GM12878 (cell line): ENCODE measurements at regions of chr1 and their contacts with region 1.

Region 1: DNA sequence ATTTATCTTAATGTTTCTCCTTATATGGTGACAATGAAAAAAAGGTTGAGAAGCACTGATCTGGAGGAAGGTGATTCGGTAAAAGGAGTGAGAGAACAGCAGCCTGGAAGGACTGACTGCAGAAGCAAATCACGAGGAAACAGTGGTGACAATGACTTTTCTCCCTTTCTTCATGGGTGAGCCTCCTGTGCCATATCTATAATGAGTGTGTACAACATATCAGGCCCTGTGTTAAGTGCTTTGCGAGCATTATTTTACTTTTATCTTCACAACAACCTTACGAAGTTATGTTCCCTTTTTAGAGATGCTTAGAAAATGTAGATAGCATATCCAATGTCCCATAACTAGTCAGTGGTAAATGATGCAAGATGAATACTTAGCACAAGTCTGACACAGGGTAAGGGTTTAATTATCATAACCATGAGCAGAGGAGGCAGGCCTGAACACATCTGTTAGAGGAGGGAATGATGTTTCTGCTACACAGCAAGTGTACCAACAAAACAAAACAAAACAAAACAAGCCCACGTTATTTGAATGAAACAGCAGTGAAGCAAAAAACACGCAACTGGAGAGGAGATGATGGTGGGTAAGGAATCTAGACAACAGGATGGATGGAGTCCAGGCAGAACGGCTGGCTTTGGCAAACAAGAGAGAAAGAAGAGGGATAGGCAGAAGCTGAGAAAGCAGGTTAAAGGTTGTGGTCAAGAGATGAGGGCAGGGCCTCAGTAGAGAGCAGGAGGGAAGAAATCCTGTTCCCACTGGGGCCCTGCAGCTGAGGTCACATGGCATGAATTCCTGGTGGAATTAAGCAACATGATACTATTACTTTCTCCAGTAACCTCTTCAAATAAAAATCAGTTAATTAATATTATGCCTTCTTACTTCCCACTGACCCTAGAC is 29.6 kb downstream of the GNG12 start:
- DNase-seq: no peak
- ATAC-seq: peak; percentile 19; the same call in 2 of the 3 replicates
- H3K4me3 ChIP-seq: no peak overlapping the region
- H3K27ac ChIP-seq: no peak overlapping the region
- H3K4me1 ChIP-seq: no peaks in the 10 kb centered on the region
- H3K27me3 ChIP-seq: no peaks in the 10 kb centered on the region; a peak in 1 of 4 replicates
- CTCF ChIP-seq: no peak
- EP300 ChIP-seq: no peak
- POLR2A ChIP-seq: no peak
- RAD21 ChIP-seq: no peak

Region 2: GRCh38 chr1:67230539-67230938 is 573.1 kb before region 1 on chr1:
- CTCF ChIA-PET with region 1: no interaction called
- POLR2A ChIA-PET with region 1: no interaction called
- RAD21 ChIA-PET with region 1: no interaction called
- SMC1A ChIA-PET with region 1: no interaction called
- in situ Hi-C with region 1: no loop called
- intact Hi-C with region 1: no loop called
- DNase-seq: no peak
- ATAC-seq: no peak
- H3K4me3 ChIP-seq: no peak overlapping the region
- H3K27ac ChIP-seq: no peak overlapping the region
- H3K4me1 ChIP-seq: no peaks in the 10 kb centered on the region
- H3K27me3 ChIP-seq: no peaks in the 10 kb centered on the region
- CTCF ChIP-seq: no peak
- EP300 ChIP-seq: no peak
- POLR2A ChIP-seq: no peak
- RAD21 ChIP-seq: no peak

Region 3: DNA sequence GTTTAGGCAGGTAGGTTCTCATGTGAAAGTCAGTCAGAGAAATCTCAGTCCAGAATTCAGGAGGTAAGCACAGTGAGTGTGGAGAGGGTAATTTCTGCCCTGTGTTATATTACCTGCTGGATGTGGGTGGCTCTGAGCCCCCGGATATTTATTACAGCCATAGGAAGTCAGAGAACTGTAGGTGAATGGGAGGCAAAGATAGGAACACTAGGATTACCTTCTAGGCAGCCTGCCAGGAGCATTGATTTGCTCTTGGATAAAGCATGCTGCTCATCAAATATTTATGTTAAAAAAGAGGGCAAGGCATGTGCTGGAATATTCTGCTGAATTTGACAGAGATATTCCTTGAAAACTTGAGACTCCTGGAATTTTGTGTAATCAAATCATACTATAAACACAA is 21.1 kb after region 1 on chr1:
- CTCF ChIA-PET with region 1: interaction called, 42 read pairs
- POLR2A ChIA-PET with region 1: interaction called, 36 read pairs
- RAD21 ChIA-PET with region 1: interaction called, 30 read pairs
- SMC1A ChIA-PET with region 1: interaction called, 93 read pairs
- in situ Hi-C with region 1: no loop called
- intact Hi-C with region 1: no loop called
- DNase-seq: no peak
- ATAC-seq: no peak
- H3K4me3 ChIP-seq: no peak overlapping the region
- H3K27ac ChIP-seq: no peak overlapping the region
- H3K4me1 ChIP-seq: no peaks in the 10 kb centered on the region
- H3K27me3 ChIP-seq: peaks cover 0 to 3% of the 10 kb centered on the region in 2 experiments; a peak in 1 of 4 replicates
- CTCF ChIP-seq: no peak
- EP300 ChIP-seq: no peak
- POLR2A ChIP-seq: no peak
- RAD21 ChIP-seq: no peak

Region 4: GRCh38 chr1:67832737-67833601 is 29.3 kb after region 1 on chr1 and contains the start of gene GNG12:
- CTCF ChIA-PET with region 1: interaction called, 11 read pairs
- POLR2A ChIA-PET with region 1: interaction called, 7 read pairs
- RAD21 ChIA-PET with region 1: interaction called, 15 read pairs
- SMC1A ChIA-PET with region 1: interaction called, 34 read pairs
- in situ Hi-C with region 1: no loop called
- intact Hi-C with region 1: no loop called
- DNase-seq: no peak
- ATAC-seq: peak; percentile 78
- H3K4me3 ChIP-seq: no peak within 1 kb of the TSS
- H3K27ac ChIP-seq: no peak within 1 kb of the TSS
- H3K4me1 ChIP-seq: no peaks in the 10 kb centered on the region
- H3K27me3 ChIP-seq: peaks cover 6 to 11% of the 10 kb centered on the region in 2 experiments; a peak in 3 of 4 replicates
- CTCF ChIP-seq: no peak
- EP300 ChIP-seq: no peak
- POLR2A ChIP-seq: no peak
- RAD21 ChIP-seq: no peak
- polyA plus RNA-seq, gene GNG12: 0.22 to 0.27 TPM

Region 5: DNA sequence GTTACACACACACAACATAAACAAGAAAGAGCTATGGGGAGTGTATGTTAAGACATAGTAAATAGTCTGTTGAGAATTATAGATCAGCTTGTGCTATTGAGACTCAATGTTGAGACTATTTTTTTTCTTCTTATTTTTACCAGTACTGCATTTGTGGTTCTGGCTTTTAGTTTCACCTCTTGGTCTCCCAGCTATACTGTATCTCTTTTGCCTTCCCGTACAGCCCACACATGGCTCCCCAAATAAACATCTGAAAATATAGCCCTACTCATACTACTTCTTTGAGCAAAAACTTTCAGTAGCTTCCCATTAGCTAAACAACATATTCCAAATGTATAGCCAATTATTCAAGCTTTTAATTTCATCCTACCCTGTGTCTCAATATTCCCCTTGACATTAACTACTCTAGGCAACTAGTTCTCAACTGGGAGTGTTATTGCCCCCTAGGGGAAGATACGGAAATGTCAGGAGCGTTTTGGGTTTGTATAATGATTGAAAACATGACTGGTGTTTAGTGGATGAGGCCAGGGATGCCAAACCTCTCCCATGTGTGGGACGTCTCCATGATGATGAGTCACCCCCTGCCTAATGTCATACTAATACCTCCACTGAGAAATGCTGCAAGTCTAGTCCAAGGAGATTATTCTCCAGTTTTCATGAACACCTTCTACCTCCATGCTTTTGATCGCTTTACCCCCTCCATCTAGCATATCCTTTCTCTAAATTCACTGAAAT is 639.4 kb after region 1 on chr1:
- CTCF ChIA-PET with region 1: no interaction called
- POLR2A ChIA-PET with region 1: no interaction called
- RAD21 ChIA-PET with region 1: no interaction called
- SMC1A ChIA-PET with region 1: no interaction called
- in situ Hi-C with region 1: no loop called
- intact Hi-C with region 1: no loop called
- DNase-seq: no peak
- ATAC-seq: peak; percentile 91
- H3K4me3 ChIP-seq: no peak overlapping the region
- H3K27ac ChIP-seq: no peak overlapping the region
- H3K4me1 ChIP-seq: no peaks in the 10 kb centered on the region
- H3K27me3 ChIP-seq: no peaks in the 10 kb centered on the region
- CTCF ChIP-seq: peak; percentile 56 to 69 (median 62)
- EP300 ChIP-seq: no peak
- POLR2A ChIP-seq: no peak
- RAD21 ChIP-seq: peak; percentile 61